ENCODE measurements at regions of chr9 and their contacts with region 1.

Region 1: GRCh38 chr9:105330755-105331154 is 86.3 kb downstream of the SLC44A1 start:
- DNase-seq: peak; percentile 89
- ATAC-seq: peak; percentile 91
- H3K4me3 ChIP-seq: peak overlapping the region in 1 of 3 experiments; percentile 3; a peak in 1 of 6 replicates
- H3K27ac ChIP-seq: peak overlapping the region; percentile 69
- H3K4me1 ChIP-seq: peaks cover 53% of the 10 kb centered on the region
- H3K27me3 ChIP-seq: no peaks in the 10 kb centered on the region
- CTCF ChIP-seq: no peak
- EP300 ChIP-seq: peak in 1 of 2 experiments; percentile 77; a peak in 2 of 4 replicates
- POLR2A ChIP-seq: no peak
- RAD21 ChIP-seq: no peak

Region 2: GRCh38 chr9:105168870-105169319 is 161.9 kb before region 1 on chr9:
- CTCF ChIA-PET with region 1: no interaction called
- POLR2A ChIA-PET with region 1: no interaction called
- in situ Hi-C with region 1: no loop called
- intact Hi-C with region 1: no loop called
- DNase-seq: no peak
- ATAC-seq: no peak; the same call in 2 of the 3 replicates
- H3K4me3 ChIP-seq: no peak overlapping the region
- H3K27ac ChIP-seq: no peak overlapping the region
- H3K4me1 ChIP-seq: peaks cover 13% of the 10 kb centered on the region
- H3K27me3 ChIP-seq: no peaks in the 10 kb centered on the region
- CTCF ChIP-seq: no peak
- EP300 ChIP-seq: no peak
- POLR2A ChIP-seq: no peak
- RAD21 ChIP-seq: no peak

Region 3: DNA sequence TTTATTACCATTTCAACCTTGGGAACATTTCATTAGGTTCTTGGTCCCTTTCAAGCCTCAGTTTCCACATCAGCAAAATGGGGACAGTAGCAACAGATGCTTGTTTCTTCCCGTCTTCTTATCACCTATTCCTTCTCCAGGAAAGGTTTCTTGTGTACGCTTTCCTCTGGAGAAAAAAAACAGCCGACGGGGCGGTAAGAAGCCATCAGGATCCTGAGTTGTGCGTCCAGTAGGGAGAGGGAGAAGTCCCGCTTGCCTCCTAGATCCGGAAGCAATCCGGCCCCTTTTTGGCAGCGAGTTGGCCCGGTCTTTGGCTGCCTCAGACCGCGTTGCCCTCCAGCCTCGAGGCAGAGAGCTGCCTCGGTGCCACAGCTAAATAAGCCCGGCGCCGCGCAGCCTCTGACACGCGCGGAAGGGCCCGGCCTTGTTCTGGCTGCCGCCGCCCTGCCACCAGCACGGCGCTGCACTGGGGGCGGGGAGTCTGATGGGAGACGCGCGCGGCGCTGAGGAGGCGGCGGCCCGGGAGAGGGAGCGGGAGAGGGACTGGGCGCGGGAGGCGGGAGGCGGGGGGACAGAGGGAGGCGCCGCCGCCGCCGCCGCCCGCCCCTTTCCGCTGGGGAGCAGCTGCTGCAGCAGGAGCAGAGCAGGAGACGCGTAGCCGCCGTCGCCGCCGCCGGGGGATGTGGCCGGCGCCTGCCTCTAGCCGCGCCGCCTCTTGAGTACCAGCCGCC is 86.6 kb before region 1 on chr9 and contains the start of gene SLC44A1:
- CTCF ChIA-PET with region 1: no interaction called
- POLR2A ChIA-PET with region 1: interaction called, 4 read pairs
- in situ Hi-C with region 1: no loop called
- intact Hi-C with region 1: loop called (anchors 2 kb)
- DNase-seq: peak; percentile 86
- ATAC-seq: peak; percentile 97
- H3K4me3 ChIP-seq: peak within 1 kb of the TSS; percentile 93 to 98 (median 97)
- H3K27ac ChIP-seq: peak within 1 kb of the TSS; percentile 68
- H3K4me1 ChIP-seq: peaks cover 63% of the 10 kb centered on the region
- H3K27me3 ChIP-seq: no peaks in the 10 kb centered on the region
- CTCF ChIP-seq: peak; percentile 54; the same call in 1 of the 2 replicates
- EP300 ChIP-seq: peak; percentile 64 to 81; a peak in 3 of 4 replicates
- POLR2A ChIP-seq: peak; percentile 57 to 62
- RAD21 ChIP-seq: peak; percentile 81; the same call in 1 of the 2 replicates
- total RNA-seq, gene SLC44A1: 30.4 and 40.8 TPM in 2 replicates

Region 4: GRCh38 chr9:105251733-105252404 is 78.9 kb before region 1 on chr9:
- CTCF ChIA-PET with region 1: no interaction called
- POLR2A ChIA-PET with region 1: interaction called, 4 read pairs
- in situ Hi-C with region 1: no loop called
- intact Hi-C with region 1: loop called (anchors 2 kb)
- DNase-seq: peak; percentile 86
- ATAC-seq: peak; percentile 97
- H3K4me3 ChIP-seq: peak overlapping the region in 2 of 3 experiments; percentile 24 to 49; a peak in 2 of 6 replicates
- H3K27ac ChIP-seq: peak overlapping the region; percentile 80
- H3K4me1 ChIP-seq: peaks cover 81% of the 10 kb centered on the region
- H3K27me3 ChIP-seq: no peaks in the 10 kb centered on the region
- CTCF ChIP-seq: peak; percentile 48
- EP300 ChIP-seq: peak in 1 of 2 experiments; percentile 78; a peak in 2 of 4 replicates
- POLR2A ChIP-seq: no peak
- RAD21 ChIP-seq: no peak

Region 5: DNA sequence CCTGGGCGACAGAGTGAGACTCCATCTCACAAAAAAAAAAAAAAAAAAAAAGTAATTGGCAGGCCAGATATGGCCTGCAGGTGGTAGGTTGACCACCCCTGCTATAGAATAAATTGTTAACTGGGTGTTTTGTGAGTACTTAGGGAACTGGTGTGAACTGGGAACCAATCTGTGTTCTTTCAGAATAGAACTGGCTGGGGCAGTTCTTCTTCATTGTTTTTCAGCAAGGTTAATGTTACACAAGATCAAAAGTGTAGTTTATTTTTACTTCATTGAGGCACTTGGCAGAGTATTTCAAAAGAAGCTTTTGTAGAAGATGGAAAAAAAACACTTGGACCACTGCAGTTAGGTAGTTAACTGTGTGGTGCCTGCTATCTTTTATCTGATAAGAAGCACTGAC is 40.9 kb after region 1 on chr9:
- CTCF ChIA-PET with region 1: no interaction called
- POLR2A ChIA-PET with region 1: no interaction called
- in situ Hi-C with region 1: no loop called
- intact Hi-C with region 1: no loop called
- DNase-seq: no peak
- ATAC-seq: no peak
- H3K4me3 ChIP-seq: no peak overlapping the region
- H3K27ac ChIP-seq: no peak overlapping the region
- H3K4me1 ChIP-seq: no peaks in the 10 kb centered on the region
- H3K27me3 ChIP-seq: no peaks in the 10 kb centered on the region
- CTCF ChIP-seq: no peak
- EP300 ChIP-seq: no peak
- POLR2A ChIP-seq: no peak
- RAD21 ChIP-seq: no peak